ENCODE measurements at regions of chr9 and their contacts with region 1.

Region 1: DNA sequence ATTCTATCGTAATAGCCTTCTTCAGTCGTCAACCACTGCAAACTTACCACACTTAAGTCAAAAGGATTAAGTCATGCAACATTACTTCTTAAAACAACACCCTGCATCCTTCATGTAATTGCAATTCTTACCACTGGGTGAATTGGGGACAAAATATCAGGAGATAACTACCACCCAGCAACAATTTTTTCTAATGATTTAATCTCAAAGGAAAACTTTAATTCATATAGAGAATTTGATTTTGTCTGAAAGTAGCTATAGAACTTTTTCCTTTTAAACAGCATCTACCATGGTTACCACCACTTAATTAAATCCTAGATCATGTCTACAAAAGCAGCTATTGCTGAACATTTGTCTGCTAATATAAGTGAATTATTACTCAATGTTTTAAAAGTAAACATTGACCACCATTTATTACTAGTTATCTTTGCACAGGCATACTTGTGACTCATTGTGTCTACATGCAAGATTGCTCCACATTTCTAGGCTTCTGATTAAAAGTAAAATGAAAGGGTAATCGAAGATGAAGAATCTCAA is 10.5 kb downstream of the MLLT3 start:
- DNase-seq: no peak
- ATAC-seq: peak in 2 of 4 donors; percentile 44 to 82
- H3K4me3 ChIP-seq: no peak overlapping the region
- H3K27ac ChIP-seq: peak overlapping the region in 2 of 12 donors; percentile 15
- H3K4me1 ChIP-seq: peaks cover 0 to 40% (median 11%) of the 10 kb centered on the region in 12 donors
- H3K27me3 ChIP-seq: no peaks in the 10 kb centered on the region
- CTCF ChIP-seq: peak in 11 of 12 donors; percentile 9 to 60 (median 38)
- POLR2A ChIP-seq: no peak

Region 2: DNA sequence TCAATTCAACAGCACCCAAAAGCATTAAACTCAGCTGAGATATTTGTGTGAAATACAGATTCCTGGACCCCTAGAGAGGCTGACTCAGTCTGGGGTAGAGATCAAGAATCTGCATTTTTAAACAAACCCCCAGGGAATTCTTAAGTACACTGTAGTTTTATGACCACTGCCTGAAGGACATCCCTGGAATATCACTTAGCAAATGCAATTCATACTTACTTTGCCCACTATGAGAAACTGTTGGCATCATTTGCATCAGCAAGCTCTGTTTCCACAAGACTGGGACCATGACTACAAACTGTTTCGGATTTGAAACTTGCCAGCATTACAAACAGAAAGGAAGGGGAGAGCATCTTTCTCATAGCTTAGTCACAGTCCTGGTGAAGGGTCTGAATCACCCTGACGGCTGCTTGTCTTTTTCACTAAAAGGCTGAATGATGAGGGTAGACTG is 53.2 kb before region 1 on chr9:
- intact Hi-C with region 1: loop called in 2 of 10 experiments (anchors 10 kb)
- DNase-seq: no peak
- ATAC-seq: peak in 1 of 4 donors; percentile 49
- H3K4me3 ChIP-seq: no peak overlapping the region
- H3K27ac ChIP-seq: no peak overlapping the region
- H3K4me1 ChIP-seq: peaks cover 0 to 50% (median 25%) of the 10 kb centered on the region in 12 donors
- H3K27me3 ChIP-seq: no peaks in the 10 kb centered on the region
- CTCF ChIP-seq: no peak
- POLR2A ChIP-seq: no peak

Region 3: GRCh38 chr9:20701060-20701459 is 89.2 kb after region 1 on chr9:
- intact Hi-C with region 1: no loop called
- DNase-seq: no peak
- ATAC-seq: peak; percentile 29 to 73 (median 59)
- H3K4me3 ChIP-seq: no peak overlapping the region
- H3K27ac ChIP-seq: peak overlapping the region in 6 of 12 donors; percentile 9 to 54 (median 16)
- H3K4me1 ChIP-seq: peaks cover 0 to 23% (median 14%) of the 10 kb centered on the region in 12 donors
- H3K27me3 ChIP-seq: no peaks in the 10 kb centered on the region
- CTCF ChIP-seq: no peak
- POLR2A ChIP-seq: no peak

Measured in heart left ventricle (tissue), 16 donors.